OCI-LY7 (cell line): ENCODE measurements at regions of chr14 and their contacts with region 1.

Region 1: DNA sequence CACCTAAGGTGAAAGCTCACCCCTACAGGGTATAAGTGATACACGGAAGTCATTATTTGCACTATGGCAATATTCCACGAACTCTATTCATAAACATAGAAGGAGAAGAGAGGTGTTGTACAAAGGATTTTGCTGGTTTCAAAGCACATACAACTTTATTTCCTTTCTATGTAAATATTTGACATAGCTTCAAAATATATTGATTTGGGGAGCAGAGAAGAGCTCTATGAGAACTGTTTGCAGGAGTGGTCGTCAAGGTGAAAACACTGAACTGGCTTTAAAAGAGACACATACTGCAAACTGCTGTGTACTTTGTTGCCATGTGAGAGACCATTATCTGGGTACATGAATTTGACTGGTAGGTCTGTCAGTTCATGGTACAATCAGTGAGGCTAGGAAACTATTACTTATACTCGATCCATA is 16.7 kb downstream of the CNIH1 start:
- DNase-seq: no peak
- H3K4me3 ChIP-seq: no peak overlapping the region
- H3K27ac ChIP-seq: no peak overlapping the region
- H3K4me1 ChIP-seq: peaks cover 7% of the 10 kb centered on the region
- CTCF ChIP-seq: no peak

Region 2: DNA sequence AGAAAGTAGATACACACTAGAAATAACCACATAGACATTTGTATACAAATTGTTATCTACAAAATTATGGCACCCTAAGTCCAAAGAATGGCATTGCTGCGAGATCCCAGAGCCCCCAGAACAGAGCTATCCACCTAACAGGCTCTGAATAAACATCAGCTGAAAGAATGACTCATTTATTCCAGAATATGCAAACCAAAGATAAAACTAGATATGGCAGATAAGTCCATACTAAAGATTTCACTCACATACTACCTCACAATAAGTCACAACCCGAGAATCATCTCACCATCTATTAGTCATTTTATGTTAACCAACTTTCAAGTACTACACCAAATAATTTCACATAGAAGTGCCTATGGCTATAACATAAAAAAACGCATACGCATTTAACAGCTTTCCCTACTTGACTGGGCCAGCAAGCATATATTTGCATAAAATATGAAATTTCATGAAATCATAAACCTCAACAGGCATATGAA is 11.1 kb after region 1 on chr14:
- CTCF ChIA-PET with region 1: no interaction called
- POLR2A ChIA-PET with region 1: interaction called, 16 read pairs
- intact Hi-C with region 1: no loop called
- DNase-seq: no peak
- H3K4me3 ChIP-seq: no peak overlapping the region
- H3K27ac ChIP-seq: no peak overlapping the region
- H3K4me1 ChIP-seq: peaks cover 68% of the 10 kb centered on the region
- CTCF ChIP-seq: no peak

Region 3: DNA sequence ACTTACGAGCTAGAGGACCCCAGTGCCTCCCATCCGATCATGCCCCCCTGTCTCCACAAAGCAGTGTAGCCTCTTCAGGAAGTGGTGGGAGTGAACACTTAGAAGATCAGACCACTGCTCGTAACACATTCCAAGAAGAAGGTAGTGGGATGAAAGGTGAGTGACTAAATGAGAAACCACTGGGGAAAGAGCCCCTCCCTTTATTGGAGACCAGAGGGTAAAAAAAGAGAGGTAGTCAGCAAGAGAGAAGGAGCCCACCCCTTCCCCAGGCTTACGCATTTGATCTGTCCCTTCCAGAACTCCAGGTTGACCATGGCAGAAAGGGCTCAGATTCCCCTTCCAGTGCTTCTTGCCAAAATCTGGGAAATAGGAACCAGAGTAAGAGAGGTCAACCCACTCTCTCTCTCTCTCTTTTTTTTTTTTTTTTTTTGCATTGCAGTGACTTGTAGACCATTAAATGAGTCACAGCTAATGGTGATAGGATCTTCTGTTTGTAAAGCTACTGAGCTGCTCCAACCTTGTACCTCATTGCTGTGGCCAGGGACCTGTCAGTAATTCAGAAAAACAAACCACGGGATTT is 312.7 kb after region 1 on chr14:
- CTCF ChIA-PET with region 1: no interaction called
- POLR2A ChIA-PET with region 1: no interaction called
- intact Hi-C with region 1: no loop called
- DNase-seq: no peak
- H3K4me3 ChIP-seq: no peak overlapping the region
- H3K27ac ChIP-seq: no peak overlapping the region
- H3K4me1 ChIP-seq: no peaks in the 10 kb centered on the region
- CTCF ChIP-seq: no peak